Right ventricle myocardium superior (tissue), 1 donor: ENCODE measurements at regions of chr3 and their contacts with region 1.

Region 1: GRCh38 chr3:87350364-87351199 is 74.2 kb upstream of the POU1F1 start:
- DNase-seq: no peak
- ATAC-seq: peak; percentile 67

Region 2: DNA sequence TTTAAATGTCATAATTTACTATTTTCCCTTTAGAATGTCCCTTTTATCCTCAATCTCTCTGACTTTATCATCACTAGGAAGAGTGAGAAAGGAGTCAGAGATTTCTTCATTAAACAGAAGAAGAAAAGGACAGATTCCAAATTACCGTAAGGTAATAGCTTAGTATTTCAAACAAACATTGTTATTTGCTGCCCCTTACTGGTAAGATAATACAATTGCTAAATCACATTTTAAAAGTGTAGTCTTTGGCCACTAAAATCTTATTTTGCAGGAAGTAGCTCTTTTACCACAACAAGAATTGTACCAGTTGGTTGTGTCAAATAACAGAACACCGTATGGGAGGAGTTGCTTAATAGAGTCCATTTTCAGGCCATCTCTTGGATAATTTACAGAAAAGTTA is 654.5 kb after region 1 on chr3:
- intact Hi-C with region 1: loop called (anchors 5 kb)
- DNase-seq: no peak
- ATAC-seq: peak; percentile 52

Region 3: DNA sequence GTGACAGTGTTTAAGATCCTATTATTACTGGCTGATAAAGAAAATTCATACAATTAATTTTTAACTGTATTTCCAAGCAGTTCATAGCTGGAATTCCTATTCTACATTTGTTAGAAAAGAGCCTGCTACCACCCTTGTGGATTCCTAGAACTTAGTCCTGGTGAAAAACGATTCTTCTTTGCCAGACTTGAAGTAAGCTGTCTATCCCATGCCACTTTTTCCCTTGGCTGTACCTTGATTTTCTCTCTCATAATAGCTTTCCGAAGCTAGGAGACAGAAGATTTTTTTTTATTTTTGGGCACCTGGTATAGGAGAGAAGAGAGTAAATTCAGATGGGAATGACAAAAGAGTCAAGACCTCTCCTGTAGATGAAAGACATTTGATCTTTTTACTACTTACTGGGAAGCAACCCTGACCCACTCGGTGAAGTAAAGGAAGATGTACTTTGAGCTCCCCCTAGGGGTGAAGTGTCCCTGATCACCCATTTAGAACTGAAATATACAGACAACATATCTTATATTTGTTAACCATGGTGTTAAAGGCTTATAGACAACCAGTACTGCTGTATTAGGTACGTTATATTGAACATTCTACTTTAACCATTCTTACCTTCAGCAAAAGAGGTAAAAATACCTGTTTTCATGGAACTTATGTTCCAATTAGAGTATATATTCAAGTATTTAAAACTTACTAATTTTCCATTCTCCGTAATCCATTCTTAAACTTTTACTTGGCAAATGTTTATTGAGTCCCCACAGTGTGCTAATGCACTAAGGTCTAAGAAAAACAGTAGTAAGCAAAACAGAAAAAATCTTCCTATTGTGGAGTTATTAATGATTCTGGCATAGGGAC is 763.0 kb after region 1 on chr3:
- intact Hi-C with region 1: loop called (anchors 10 kb)
- DNase-seq: no peak
- ATAC-seq: peak; percentile 94